ENCODE measurements at regions of chr17 and their contacts with region 1.

Region 1: DNA sequence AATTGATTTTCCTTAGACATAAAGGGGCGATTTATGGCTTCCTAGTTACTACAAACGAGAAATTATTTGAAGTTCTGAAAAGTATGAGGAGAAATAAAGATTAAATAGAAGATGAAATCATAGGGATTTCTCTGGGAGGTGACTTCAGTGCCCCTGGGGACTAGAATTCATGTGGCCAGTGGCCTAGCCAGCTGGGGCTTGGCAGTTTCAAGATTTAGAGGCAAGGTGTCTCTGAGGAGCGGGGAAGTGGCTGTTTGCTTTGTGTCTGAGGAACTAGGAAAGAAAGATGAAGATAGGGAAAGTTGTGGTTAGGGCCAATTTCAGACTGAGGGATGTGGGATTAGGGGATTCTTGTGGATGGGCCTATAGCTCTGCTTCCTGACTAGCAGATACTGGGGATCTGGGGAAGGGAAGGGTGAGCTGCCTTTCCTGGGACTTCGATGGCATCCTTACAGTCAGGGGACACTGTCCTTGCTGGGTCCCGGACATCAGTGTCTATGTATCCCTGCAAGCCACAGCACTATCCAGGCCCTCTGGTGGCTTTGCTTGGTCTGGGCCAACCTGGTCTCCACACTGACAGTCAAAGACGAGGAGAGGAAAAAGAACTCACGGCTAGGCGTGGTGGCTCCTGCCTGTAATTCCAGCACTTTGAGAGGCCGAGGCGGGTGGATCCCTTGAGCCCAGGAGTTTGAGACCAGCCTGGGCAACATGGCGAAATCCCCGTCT is 22.4 kb upstream of the MEOX1 start:
- DNase-seq: no peak
- CTCF ChIP-seq: no peak

Region 2: GRCh38 chr17:43673516-43674323 is 10.4 kb before region 1 on chr17:
- CTCF ChIA-PET with region 1: interaction called, 25 read pairs
- POLR2A ChIA-PET with region 1: no interaction called
- DNase-seq: peak; percentile 70
- CTCF ChIP-seq: peak; percentile 85

Region 3: GRCh38 chr17:43720311-43721060 is 36.4 kb after region 1 on chr17:
- CTCF ChIA-PET with region 1: no interaction called
- POLR2A ChIA-PET with region 1: no interaction called
- DNase-seq: peak; percentile 88
- CTCF ChIP-seq: no peak

Region 4: GRCh38 chr17:43734376-43734775 is 50.3 kb after region 1 on chr17:
- CTCF ChIA-PET with region 1: no interaction called
- POLR2A ChIA-PET with region 1: no interaction called
- DNase-seq: no peak
- CTCF ChIP-seq: no peak